ENCODE measurements at regions of chr1 and their contacts with region 1.

Region 1: GRCh38 chr1:24635195-24635843 is 7.8 kb upstream of the SRRM1 start:
- DNase-seq: no peak
- H3K4me3 ChIP-seq: no peak overlapping the region
- H3K27ac ChIP-seq: no peak overlapping the region
- H3K4me1 ChIP-seq: peaks cover 0 to 4% (median 0%) of the 10 kb centered on the region in 4 experiments; a peak in 4 of 7 replicates
- H3K27me3 ChIP-seq: no peaks in the 10 kb centered on the region
- CTCF ChIP-seq: peak in 2 of 3 experiments; percentile 65 to 73; a peak in 3 of 4 replicates
- EP300 ChIP-seq: no peak
- POLR2A ChIP-seq: no peak
- RAD21 ChIP-seq: peak; percentile 82 to 86

Region 2: GRCh38 chr1:24541711-24542346 is 93.5 kb before region 1 on chr1:
- CTCF ChIA-PET with region 1: interaction called, 45 read pairs
- POLR2A ChIA-PET with region 1: no interaction called
- DNase-seq: peak in 1 of 2 experiments; percentile 76
- H3K4me3 ChIP-seq: no peak overlapping the region
- H3K27ac ChIP-seq: no peak overlapping the region
- H3K4me1 ChIP-seq: peaks cover 0 to 5% (median 0%) of the 10 kb centered on the region in 4 experiments; a peak in 1 of 7 replicates
- H3K27me3 ChIP-seq: no peaks in the 10 kb centered on the region
- CTCF ChIP-seq: peak; percentile 75 to 84 (median 78)
- EP300 ChIP-seq: no peak
- POLR2A ChIP-seq: no peak
- RAD21 ChIP-seq: peak; percentile 81 to 84

Region 3: DNA sequence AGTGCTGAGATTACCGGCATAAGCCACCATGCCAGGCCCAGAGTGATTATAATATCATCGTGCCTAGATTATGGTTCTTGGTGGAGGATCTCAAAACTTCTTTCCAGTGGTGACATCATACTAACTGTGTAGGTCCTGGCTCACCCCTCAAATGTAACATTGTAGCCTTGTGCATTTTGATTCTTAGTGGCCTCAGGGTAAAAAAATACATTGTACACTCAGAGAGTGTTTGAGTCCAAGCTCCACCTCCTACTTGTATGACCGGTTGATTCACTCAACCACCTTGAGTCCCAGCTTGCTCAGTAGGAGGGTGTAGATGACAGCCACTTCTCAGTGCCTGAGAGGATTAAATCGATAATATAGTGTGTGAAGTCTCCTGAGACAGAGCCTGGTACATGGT is 41.2 kb before region 1 on chr1:
- CTCF ChIA-PET with region 1: interaction called, 10 read pairs
- POLR2A ChIA-PET with region 1: interaction called, 3 read pairs
- DNase-seq: no peak
- H3K4me3 ChIP-seq: no peak overlapping the region
- H3K27ac ChIP-seq: no peak overlapping the region
- H3K4me1 ChIP-seq: no peaks in the 10 kb centered on the region
- H3K27me3 ChIP-seq: no peaks in the 10 kb centered on the region
- CTCF ChIP-seq: no peak
- EP300 ChIP-seq: no peak
- POLR2A ChIP-seq: no peak
- RAD21 ChIP-seq: no peak

Region 4: DNA sequence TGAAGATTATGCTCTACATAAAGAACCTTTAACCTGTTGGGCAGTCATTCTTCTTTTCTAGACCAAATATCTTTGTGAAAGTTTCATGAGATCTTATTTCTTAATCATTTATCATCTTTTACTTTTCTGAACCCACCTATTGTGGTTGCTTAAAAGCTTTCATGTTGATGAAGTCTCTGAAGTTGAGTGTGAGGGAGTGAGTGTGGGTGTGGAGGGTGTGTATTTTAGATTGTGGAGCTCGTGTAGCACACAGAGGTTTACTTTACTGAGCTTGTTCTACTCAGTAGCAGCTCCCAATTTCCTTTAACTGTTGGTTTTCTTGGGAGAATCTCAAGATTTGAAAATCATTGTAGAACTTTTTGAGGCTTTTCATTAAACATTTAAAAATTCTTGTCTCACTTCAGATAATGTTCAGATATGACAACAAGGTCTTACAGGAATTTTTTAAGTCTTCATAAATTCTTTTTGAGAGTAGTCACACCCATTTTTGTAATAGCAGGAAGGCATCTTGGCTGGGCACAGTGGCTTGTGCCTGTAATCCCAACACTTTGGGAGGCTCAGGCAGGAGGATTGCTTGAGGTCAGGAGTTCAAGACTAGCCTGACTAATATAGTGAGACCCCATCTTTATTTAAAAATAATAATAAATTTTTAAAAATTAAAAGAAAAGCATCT is 24.8 kb after region 1 on chr1:
- CTCF ChIA-PET with region 1: no interaction called
- POLR2A ChIA-PET with region 1: no interaction called
- DNase-seq: no peak
- H3K4me3 ChIP-seq: no peak overlapping the region
- H3K27ac ChIP-seq: no peak overlapping the region
- H3K4me1 ChIP-seq: no peaks in the 10 kb centered on the region
- H3K27me3 ChIP-seq: no peaks in the 10 kb centered on the region
- CTCF ChIP-seq: no peak
- EP300 ChIP-seq: no peak
- POLR2A ChIP-seq: no peak
- RAD21 ChIP-seq: no peak

Measured in H1 (cell line).